Psoas muscle (tissue), 8 donors: ENCODE measurements at regions of chr5 and their contacts with region 1.

Region 1: DNA sequence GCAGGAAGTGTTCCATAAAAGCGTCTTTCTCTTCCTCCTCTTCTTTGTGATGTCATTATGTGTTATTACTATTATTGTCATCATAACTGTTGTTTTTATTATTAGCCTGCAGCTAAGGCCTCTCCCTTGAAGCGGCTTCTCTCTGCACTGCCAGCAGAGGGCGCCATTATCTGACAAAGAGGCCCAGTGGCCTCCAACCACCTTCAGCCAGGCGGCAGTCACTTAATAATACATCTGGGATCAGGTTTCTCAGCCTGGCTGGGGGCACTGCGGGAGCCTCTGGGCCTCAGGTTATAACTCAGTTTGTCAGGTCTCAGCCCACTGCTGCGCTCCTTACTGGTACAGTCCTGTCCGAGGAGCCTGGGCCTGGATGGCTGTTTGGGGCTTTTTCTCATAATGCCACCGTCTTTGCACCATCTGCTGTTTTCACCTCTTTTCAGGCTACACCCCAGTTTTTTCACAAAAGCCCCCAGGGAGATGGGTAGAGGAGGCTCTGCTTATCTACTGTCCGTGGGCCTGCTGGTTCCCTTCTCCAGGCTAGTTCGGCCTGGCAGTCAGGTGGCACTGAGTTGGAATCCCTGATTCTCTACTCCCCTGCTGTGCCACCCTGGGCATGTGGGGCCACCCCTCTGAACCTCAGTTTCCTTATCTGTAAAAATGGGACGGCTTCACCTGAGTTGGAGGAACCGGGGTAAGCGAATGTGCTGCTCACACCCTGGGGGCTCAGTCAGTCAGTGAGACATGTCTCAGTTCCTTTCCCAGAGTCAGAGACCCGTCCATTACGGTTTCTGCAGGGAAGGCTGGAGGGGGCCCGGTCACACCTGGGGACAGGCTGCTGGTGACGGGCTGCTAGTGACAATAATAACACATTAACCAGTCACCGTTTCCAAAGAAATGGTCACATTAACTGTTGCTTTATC is 282.1 kb downstream of the NSG2 start:
- DNase-seq: peak; percentile 61 to 75
- ATAC-seq: peak; percentile 64 to 86 (median 81)
- H3K4me3 ChIP-seq: no peak overlapping the region
- H3K27ac ChIP-seq: no peak overlapping the region
- H3K4me1 ChIP-seq: no peaks in the 10 kb centered on the region
- H3K27me3 ChIP-seq: peaks cover 0 to 28% (median 2%) of the 10 kb centered on the region in 3 donors
- CTCF ChIP-seq: peak; percentile 65

Region 2: DNA sequence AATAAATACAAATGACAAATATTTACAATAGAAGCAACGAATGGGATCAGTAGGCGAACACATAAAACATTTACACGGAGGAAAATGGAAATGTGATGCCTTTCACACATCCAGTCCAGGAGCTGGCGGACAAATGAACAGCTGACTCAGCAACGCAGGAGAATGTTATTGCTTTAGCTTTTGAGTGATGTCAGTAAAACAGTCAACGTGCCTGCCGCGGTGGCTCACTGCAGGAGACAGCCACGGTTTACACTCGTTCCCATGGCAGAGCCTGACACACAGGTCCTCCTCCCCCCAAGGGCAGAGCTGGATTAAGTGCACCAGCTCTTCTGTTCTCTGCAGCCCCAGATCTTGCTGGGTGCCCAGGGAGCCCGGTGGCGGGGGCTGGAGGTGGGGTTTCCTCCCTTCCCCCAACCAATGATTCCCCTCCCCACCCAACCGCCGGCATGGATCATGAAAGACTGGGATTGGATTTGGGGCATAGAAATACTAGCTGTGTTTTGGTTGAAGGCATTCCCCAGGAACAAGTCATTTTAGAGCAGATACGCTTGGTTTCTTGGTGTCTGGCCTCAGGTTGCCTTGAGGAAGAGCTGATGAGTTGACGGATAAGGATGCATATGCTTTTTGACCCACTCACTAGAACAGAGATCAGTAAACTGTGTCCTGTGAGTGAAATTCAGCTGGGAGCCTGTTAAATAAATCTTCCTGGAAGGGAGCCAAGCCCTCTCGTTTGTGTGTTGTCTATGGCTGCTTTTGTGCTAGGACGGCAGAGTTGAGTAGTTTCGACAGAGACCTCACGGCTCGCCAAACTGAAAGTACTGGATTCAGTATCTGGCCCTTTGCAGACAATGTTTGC is 1011.9 kb before region 1 on chr5:
- intact Hi-C with region 1: loop called in 1 of 2 experiments (anchors 10 kb)
- DNase-seq: no peak
- ATAC-seq: peak in 3 of 4 donors; percentile 34 to 48 (median 40)
- H3K4me3 ChIP-seq: peak overlapping the region; percentile 22
- H3K27ac ChIP-seq: peak overlapping the region; percentile 6
- H3K4me1 ChIP-seq: peaks cover 4% of the 10 kb centered on the region
- H3K27me3 ChIP-seq: no peaks in the 10 kb centered on the region
- CTCF ChIP-seq: no peak

Region 3: GRCh38 chr5:174436781-174437201 is 109.2 kb after region 1 on chr5:
- intact Hi-C with region 1: no loop called
- DNase-seq: no peak
- ATAC-seq: no peak
- H3K4me3 ChIP-seq: no peak overlapping the region
- H3K27ac ChIP-seq: no peak overlapping the region
- H3K4me1 ChIP-seq: no peaks in the 10 kb centered on the region
- H3K27me3 ChIP-seq: peaks cover 0 to 13% (median 4%) of the 10 kb centered on the region in 3 donors
- CTCF ChIP-seq: no peak

Region 4: DNA sequence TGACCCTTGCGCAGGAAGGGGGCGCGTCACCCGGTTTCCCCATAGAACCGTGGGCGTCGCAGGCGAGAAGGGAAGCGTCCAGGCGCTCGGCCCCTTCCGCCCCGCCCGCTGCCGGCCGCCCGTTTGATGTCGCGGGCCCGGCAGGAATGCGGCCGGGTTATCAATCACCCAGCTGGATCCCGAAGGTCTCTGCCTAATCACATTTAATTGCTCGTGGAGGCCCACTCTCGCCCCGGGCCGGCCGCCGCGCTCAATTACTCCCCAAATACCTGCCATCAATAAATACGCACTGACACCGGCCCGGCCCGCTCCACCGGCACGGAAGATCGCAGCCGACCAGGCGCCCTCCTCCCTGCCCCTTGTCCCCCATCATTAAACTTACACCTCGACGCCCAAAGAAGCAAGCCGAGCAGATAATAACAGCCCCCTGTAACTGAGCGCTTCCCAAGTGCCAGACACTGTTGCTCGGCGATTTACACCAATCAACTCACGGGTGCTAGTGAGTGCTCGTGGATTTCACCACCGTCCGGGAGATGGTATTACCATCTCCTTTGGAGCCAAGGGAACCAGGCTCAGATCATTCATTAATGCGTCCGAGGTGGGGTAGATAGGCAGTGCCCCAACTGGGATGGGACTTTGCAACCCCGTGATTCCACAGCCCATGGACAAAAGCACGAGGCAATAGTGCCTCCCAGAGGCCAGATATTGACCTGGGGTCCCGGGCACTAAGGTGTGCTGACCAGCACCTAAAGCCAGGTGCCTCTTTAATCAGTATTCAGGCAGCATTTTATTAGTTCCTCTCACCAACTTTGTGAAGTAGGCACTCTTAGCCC is 408.1 kb after region 1 on chr5:
- intact Hi-C with region 1: loop called in 1 of 2 experiments (anchors 10 kb)
- DNase-seq: no peak
- ATAC-seq: peak in 3 of 4 donors; percentile 71 to 80 (median 71)
- H3K4me3 ChIP-seq: peak overlapping the region; percentile 39
- H3K27ac ChIP-seq: no peak overlapping the region
- H3K4me1 ChIP-seq: no peaks in the 10 kb centered on the region
- H3K27me3 ChIP-seq: peaks cover 9 to 69% (median 31%) of the 10 kb centered on the region in 3 donors
- CTCF ChIP-seq: peak; percentile 41

Region 5: DNA sequence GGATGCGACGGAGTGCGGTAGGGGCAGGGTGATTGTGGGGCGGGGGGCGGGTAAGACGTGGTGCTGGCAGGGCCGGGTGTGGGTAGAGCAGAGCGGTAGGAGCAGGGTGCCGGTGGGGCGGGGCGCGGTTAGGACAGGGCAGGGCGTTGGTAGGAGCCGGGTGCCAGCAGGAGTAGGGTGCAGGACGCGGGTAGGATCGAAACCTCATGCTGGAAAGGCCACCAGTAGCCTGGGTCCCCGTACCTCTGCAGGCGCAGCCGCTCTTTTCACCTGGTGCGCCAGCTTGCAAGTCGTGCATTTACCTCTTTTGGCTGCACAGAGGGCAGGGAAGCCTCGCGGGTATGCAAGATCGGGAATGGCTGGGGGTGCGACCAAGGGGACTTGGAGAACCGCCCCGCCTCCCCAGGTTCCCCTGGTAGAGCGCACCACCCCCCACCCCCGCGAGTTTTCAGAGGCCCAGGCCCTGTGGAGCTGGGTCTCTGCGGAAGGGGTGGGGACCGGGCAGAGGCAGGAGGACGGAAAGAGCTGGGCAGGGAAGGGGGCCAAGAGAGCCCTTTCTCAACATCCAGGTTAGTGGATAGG is 1805.8 kb after region 1 on chr5:
- intact Hi-C with region 1: no loop called
- DNase-seq: no peak
- ATAC-seq: no peak
- H3K4me3 ChIP-seq: no peak overlapping the region
- H3K27ac ChIP-seq: no peak overlapping the region
- H3K4me1 ChIP-seq: no peaks in the 10 kb centered on the region
- H3K27me3 ChIP-seq: peaks cover 0 to 14% (median 11%) of the 10 kb centered on the region in 3 donors
- CTCF ChIP-seq: no peak